ENCODE measurements at regions of chr9 and their contacts with region 1.

Region 1: DNA sequence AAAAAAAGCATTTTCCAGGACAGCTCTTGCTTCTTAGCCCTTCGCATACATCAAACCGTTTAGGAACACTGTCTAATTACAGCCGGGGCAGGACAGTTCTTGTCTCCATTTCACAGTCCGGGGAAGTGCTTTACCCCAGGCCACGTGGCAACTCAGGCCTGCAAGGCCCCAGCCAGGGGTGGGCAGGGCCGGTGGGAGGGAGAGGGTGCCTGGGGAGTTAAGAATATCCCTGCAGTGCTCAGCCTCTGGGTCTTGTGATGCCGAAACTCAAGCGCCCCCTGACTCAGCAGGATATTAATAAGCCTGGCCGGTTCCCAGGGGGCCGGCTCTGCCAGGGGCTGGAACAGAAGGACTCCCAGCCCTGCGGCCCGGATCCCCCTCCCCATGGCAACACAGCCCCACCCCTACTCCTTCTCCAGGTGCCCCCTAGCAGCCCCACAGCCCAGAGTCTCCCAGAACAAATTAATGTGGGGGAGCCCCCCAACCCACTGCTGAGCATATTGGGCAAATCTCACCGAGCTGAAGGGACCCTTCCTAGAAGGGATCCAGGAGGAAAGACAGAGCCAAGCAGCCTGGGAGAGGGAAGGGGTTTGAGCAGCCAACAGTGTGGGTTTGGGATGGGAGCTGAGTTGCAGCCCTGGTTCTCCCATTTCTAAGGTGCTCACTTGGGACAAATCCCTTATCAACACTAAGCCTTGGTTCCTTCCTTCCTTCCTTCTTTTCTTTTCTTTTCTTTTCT is 45.3 kb downstream of the PLPP7 start:
- DNase-seq: peak; percentile 82 to 91 (median 86)
- ATAC-seq: peak; percentile 88 to 92 (median 91)
- H3K4me3 ChIP-seq: no peak overlapping the region
- H3K27ac ChIP-seq: peak overlapping the region; percentile 11 to 93 (median 84)
- H3K4me1 ChIP-seq: peaks cover 0 to 33% (median 15%) of the 10 kb centered on the region in 12 donors
- H3K27me3 ChIP-seq: no peaks in the 10 kb centered on the region
- CTCF ChIP-seq: no peak
- POLR2A ChIP-seq: no peak

Region 2: DNA sequence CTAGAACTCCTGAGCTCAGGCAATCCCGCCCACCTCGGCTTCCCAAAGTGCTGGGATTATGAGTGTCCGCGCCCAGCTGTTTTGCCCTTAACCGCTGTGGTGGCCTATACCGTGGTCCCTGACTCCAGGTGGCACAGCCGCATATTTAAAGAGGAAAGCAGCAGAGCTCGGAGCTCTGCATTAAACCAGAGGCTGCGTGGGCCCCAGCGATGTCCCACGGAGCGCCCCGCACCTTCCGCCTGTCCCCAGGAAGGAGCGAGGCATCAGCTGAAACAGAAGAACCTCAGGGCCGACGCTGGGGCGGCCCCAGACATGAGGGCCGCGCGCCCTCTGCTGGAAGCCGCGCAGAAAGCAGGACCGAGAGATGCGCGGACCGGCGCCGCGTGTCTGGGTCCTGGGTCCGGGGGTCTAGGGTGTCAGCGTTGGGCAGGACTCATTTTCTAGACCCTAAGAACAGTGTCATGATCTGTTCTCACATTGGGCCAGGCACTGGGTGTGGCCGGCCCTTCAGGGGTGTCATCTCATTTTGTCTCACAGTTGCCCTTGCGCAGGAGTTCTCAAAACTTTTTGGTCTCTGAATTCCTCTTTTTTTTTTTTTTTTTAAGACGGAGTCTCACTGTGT is 288.1 kb before region 1 on chr9:
- intact Hi-C with region 1: loop called in 3 of 10 experiments (anchors 10 kb)
- DNase-seq: peak; percentile 42 to 79 (median 64)
- ATAC-seq: peak; percentile 58 to 92 (median 85)
- H3K4me3 ChIP-seq: peak overlapping the region in 1 of 12 donors; percentile 1
- H3K27ac ChIP-seq: no peak overlapping the region
- H3K4me1 ChIP-seq: peaks cover 0 to 6% (median 0%) of the 10 kb centered on the region in 12 donors
- H3K27me3 ChIP-seq: no peaks in the 10 kb centered on the region
- CTCF ChIP-seq: peak; percentile 90 to 97 (median 92)
- POLR2A ChIP-seq: peak in 1 of 2 donors; percentile 17

Region 3: DNA sequence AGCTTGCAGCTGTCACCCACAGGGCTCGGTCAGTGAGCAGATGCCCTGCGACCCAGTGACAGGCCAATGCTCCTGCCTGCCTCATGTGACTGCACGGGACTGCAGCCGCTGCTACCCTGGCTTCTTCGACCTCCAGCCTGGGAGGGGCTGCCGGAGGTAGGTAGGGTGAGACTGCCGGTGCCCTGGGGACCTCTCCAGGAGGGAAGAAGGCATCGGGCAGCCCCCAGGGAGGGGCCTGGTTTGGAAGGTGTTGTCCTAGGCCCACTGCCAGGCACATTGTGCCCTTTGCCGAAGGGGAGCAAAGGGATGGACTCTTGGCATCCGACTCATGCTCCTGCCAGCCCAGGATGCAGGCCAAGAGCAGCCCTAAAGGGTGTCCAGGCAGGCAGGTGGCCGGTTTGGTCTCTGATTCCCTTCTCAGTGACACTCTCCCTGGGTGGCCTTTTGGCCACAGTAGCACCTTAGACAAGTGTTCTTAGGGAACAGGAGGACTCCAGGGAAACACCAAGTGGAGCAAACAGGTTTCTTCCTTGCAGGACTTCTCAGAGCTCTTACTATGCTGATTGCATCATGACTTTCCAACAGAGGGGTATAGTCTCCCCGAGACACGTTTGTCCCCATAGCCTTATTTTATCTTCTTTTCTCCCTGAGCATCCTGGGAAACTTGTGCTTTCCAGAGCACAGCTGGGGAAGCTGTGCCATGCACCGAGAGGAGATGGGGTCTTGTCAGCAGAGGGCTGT is 266.6 kb before region 1 on chr9:
- intact Hi-C with region 1: loop called in 2 of 10 experiments (anchors 10 kb)
- DNase-seq: peak in 2 of 5 donors; percentile 44 to 46
- ATAC-seq: peak; percentile 58 to 76 (median 59)
- H3K4me3 ChIP-seq: no peak overlapping the region
- H3K27ac ChIP-seq: no peak overlapping the region
- H3K4me1 ChIP-seq: peaks cover 0 to 10% (median 0%) of the 10 kb centered on the region in 12 donors
- H3K27me3 ChIP-seq: no peaks in the 10 kb centered on the region
- CTCF ChIP-seq: no peak
- POLR2A ChIP-seq: no peak

Region 4: GRCh38 chr9:131237931-131238401 is 96.8 kb before region 1 on chr9:
- intact Hi-C with region 1: loop called in 9 of 10 experiments (anchors 2 to 10 kb)
- DNase-seq: peak; percentile 69 to 87 (median 82)
- ATAC-seq: peak; percentile 36 to 65 (median 64)
- H3K4me3 ChIP-seq: peak overlapping the region in 5 of 12 donors; percentile 1 to 35 (median 19)
- H3K27ac ChIP-seq: peak overlapping the region; percentile 62 to 96 (median 85)
- H3K4me1 ChIP-seq: peaks cover 0 to 58% (median 39%) of the 10 kb centered on the region in 12 donors
- H3K27me3 ChIP-seq: no peaks in the 10 kb centered on the region
- CTCF ChIP-seq: no peak
- POLR2A ChIP-seq: no peak

Region 5: DNA sequence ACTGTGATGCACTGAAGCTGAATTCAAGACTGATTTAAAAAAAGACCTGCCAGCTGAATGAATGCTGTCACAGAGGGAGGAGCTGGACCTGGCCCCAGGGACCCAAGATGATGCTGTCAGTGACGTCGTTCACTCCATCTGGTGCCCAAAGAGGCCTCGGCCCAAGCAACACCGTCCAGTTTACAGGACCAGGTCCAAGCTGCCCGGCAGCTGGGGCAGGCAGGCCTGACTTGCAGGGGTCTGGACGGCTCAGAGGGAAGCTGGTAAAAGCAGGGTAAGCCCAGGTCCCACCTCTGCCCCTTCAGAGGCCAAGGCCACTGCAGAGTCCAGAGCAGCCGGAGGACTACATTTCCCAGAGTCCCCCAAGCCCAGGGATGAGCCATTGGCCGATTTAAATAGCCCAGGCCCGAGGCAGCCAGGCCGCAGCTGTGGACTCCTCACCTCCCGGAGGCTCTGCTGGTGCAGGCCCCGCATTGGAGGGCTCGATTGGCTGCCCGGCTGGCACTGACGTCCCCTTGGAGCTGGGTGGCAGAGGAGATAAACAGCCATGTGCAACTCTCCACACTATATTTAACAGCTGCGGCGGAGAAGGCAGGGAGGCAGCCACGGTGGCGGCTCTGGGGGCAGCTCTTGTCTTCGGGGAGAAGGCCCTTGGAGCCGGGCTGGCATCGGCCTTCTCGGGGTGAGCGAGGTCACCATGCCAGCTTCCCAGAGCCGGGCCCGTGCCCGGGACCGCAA is 45.3 kb before region 1 on chr9 and contains the start of gene PLPP7:
- intact Hi-C with region 1: loop called in 4 of 10 experiments (anchors 5 to 10 kb)
- DNase-seq: peak; percentile 88 to 95 (median 89)
- ATAC-seq: peak; percentile 88 to 94 (median 91)
- H3K4me3 ChIP-seq: peak within 1 kb of the TSS; percentile 57 to 88 (median 62)
- H3K27ac ChIP-seq: peak within 1 kb of the TSS; percentile 78 to 98 (median 94)
- H3K4me1 ChIP-seq: peaks cover 0 to 71% (median 25%) of the 10 kb centered on the region in 12 donors
- H3K27me3 ChIP-seq: no peaks in the 10 kb centered on the region
- CTCF ChIP-seq: peak in 1 of 12 donors; percentile 2
- POLR2A ChIP-seq: peak; percentile 61 to 92
- total RNA-seq, gene PLPP7: 78.8 to 293 (median 109) TPM

Region 6: DNA sequence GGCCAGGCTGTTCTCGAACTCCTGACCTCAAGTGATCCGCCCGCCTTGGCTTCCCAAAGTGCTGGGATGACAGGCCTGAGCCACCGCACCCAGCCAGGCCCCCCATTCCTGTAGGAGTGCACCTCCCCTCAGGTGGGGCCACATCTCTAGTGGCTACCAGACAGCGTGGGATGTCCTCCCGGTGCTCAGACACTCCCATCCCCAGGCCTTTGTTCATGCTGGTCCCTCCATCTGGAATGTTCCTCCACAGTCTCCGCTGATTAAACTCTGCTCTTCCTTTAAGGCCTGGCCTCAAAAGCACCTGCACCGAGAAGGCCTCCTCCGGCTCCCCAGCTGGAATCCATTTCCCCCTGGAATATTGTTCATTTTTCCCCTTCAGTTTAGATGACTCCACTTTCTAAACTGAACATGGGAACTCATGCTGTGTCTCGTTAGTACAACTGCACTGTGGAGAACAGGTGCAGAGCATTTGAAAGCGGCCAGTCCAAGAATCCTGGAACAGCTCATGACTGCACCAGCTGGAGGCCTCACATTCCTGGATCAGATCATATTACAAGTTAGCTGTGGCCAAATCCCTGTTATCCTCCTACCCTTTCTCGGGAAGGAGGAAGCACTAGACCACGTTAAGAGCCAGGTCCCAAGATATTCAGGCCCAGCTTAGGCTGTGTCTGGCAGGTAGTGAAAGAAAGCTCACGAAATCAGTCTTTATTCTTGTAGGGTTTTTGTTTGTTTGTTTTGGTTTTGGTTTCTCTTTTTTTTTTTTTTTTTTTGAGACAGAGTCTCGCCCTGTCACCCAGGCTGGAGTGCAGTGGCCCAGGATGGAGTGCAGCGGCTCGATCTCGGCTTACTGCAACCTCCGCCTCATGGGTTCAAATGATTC is 48.3 kb after region 1 on chr9:
- intact Hi-C with region 1: no loop called
- DNase-seq: peak; percentile 54 to 79 (median 69)
- ATAC-seq: peak; percentile 94 to 98 (median 95)
- H3K4me3 ChIP-seq: peak overlapping the region in 2 of 12 donors; percentile 5 to 34
- H3K27ac ChIP-seq: peak overlapping the region; percentile 32 to 82 (median 68)
- H3K4me1 ChIP-seq: peaks cover 0 to 20% (median 11%) of the 10 kb centered on the region in 12 donors
- H3K27me3 ChIP-seq: no peaks in the 10 kb centered on the region
- CTCF ChIP-seq: no peak
- POLR2A ChIP-seq: no peak

Measured in heart left ventricle (tissue), 16 donors.